ENCODE measurements at regions of chr6 and their contacts with region 1.

Region 1: DNA sequence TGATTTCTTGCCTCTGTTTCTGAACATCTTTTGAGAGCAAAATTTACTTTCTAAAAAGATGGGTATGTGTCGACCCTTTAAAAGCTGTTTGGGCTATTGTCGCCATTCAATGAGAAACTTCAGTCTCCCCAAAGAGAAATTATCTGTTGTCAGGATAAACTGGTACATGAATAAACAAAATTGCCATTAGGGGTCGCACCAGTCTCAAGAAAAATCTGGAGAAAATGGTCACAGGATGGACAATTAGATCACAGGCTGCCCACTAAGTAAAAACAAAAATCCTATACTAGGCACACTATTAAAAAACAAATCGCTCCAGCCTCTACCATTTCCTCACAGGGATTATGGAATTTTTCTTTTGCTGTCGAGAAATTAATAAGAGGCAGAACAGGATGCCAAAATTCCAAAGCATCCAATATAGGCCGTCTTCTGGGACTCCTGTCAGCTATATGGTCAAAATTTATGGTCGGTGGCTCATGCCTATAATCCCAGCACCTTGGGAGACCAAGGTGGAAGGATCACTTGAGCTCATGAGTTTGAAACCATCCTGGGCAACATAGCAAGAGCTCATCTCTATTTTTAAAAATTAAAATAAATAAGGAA is 5.5 kb upstream of the HLA-E start:
- DNase-seq: no peak
- ATAC-seq: no peak
- H3K4me3 Mint-ChIP-seq: no peak overlapping the region
- H3K27ac Mint-ChIP-seq: no peak overlapping the region
- H3K4me1 Mint-ChIP-seq: peaks cover 33% of the 10 kb centered on the region
- H3K27me3 Mint-ChIP-seq: peaks cover 26% of the 10 kb centered on the region
- CTCF ChIP-seq: peak; percentile 58

Region 2: GRCh38 chr6:30020626-30021025 is 463.2 kb before region 1 on chr6:
- CTCF ChIA-PET with region 1: no interaction called
- POLR2A ChIA-PET with region 1: no interaction called
- intact Hi-C with region 1: no loop called
- DNase-seq: no peak
- ATAC-seq: no peak
- H3K4me3 Mint-ChIP-seq: no peak overlapping the region
- H3K27ac Mint-ChIP-seq: no peak overlapping the region
- H3K4me1 Mint-ChIP-seq: peaks cover 11% of the 10 kb centered on the region
- H3K27me3 Mint-ChIP-seq: no peaks in the 10 kb centered on the region
- CTCF ChIP-seq: no peak

Region 3: DNA sequence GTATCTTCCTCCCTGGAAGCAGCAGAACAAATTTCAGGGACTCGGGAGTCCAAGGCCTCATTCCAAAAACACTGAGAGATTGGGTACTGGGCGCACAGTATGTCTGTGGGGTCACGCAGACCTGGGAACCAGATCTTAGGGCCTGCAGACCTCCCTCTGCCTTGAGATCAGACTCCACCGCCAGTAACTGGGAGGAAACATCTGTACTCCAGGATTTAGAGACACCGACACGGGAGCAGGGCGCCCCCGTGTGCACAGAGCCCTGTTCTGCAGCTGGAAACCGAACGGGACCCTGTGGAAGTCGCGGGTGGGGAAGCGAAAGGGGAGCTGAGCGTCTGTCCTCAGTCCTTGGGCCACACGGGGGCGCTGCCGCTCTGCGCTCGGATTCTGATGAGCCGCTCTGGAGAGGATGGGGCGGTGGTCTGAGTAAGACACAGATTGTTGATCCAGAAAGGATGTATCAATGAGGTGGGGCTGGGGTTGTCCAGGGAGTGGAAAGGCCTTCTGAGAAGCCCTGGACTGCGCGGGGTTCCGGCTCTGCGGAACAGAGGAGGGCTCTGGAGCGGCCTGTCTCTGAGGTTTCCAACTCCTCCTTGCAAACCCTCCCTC is 30.2 kb before region 1 on chr6:
- CTCF ChIA-PET with region 1: interaction called, 15 read pairs
- POLR2A ChIA-PET with region 1: interaction called, 3 read pairs
- intact Hi-C with region 1: loop called (anchors 1 kb)
- DNase-seq: peak; percentile 82
- ATAC-seq: peak; percentile 93
- H3K4me3 Mint-ChIP-seq: peak overlapping the region; percentile 29
- H3K27ac Mint-ChIP-seq: no peak overlapping the region
- H3K4me1 Mint-ChIP-seq: peaks cover 26% of the 10 kb centered on the region
- H3K27me3 Mint-ChIP-seq: peaks cover 67% of the 10 kb centered on the region
- CTCF ChIP-seq: no peak

Region 4: GRCh38 chr6:30533460-30534294 is 49.9 kb after region 1 on chr6:
- CTCF ChIA-PET with region 1: interaction called, 411 read pairs
- POLR2A ChIA-PET with region 1: interaction called, 458 read pairs
- intact Hi-C with region 1: loop called (anchors 1 kb)
- DNase-seq: no peak
- ATAC-seq: no peak
- H3K4me3 Mint-ChIP-seq: no peak overlapping the region
- H3K27ac Mint-ChIP-seq: peak overlapping the region; percentile 85
- H3K4me1 Mint-ChIP-seq: peaks cover 45% of the 10 kb centered on the region
- H3K27me3 Mint-ChIP-seq: no peaks in the 10 kb centered on the region
- CTCF ChIP-seq: no peak

Region 5: DNA sequence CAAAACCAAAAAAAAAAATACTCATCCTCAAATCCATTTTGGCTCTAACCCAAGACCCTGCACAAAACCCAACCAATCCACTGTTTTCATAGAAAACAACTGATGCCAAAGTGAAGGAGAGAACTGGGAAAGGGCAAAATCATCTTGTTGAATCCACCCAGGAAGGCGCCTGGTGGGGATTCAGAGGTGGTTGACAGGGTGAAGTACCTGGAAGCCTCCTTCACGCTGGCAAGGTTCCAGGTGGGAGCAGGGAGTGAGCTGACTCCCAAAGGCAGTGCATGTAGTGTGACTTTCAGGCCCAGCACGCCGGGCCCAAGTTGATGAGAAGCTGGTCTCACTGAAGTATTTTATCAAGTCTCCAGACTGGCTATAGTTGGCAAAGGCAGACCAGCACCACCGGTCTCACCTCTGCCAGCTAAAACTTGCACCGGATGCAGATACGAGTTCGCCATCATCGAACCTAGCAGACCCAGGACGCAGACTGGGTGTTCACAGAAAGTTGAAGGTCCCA is 116.7 kb after region 1 on chr6:
- CTCF ChIA-PET with region 1: interaction called, 171 read pairs
- POLR2A ChIA-PET with region 1: interaction called, 8 read pairs
- intact Hi-C with region 1: loop called (anchors 1 kb)
- DNase-seq: no peak
- ATAC-seq: no peak
- H3K4me3 Mint-ChIP-seq: no peak overlapping the region
- H3K27ac Mint-ChIP-seq: no peak overlapping the region
- H3K4me1 Mint-ChIP-seq: peaks cover 9% of the 10 kb centered on the region
- H3K27me3 Mint-ChIP-seq: no peaks in the 10 kb centered on the region
- CTCF ChIP-seq: no peak

Region 6: DNA sequence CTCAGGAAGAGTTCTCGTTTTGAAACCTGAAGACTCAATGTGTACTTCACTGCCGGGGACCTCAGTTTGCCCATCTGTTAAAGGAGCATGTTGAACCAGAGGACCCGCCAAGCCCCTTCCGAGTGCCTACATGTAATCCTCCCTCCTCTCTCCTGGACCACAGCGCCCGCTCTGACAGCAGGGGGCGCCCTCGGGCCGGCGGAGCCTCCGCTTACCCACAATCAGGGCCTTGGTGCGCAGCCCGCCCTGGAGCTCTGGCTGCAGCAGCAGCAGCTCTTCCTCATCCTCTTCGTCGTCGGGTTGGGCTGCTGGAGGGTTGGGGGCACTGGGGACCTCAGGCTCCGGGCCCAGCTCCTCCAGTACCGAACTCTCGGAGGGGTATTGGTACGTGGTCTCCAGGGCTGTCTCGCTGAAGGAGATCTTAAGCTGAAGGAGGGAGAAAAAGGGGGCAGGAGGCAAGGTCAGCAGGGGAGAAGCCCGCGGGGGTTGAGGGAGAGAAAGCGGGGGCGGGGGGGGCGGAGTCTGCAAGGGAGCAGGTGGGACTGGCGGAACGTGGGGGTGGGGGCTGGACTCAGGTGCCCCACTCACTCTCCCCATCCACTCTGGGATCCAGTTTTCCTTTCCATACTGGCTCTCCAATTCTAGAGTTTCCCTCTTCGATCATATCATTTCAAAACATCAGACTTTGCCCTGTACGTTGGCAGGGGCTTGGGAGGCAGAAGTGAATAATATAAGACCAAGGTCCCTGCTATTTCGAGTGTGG is 195.4 kb after region 1 on chr6:
- CTCF ChIA-PET with region 1: interaction called, 11 read pairs
- POLR2A ChIA-PET with region 1: no interaction called
- intact Hi-C with region 1: no loop called
- DNase-seq: peak; percentile 94
- ATAC-seq: peak; percentile 33
- H3K4me3 Mint-ChIP-seq: peak overlapping the region; percentile 92
- H3K27ac Mint-ChIP-seq: peak overlapping the region; percentile 99
- H3K4me1 Mint-ChIP-seq: peaks cover 62% of the 10 kb centered on the region
- H3K27me3 Mint-ChIP-seq: no peaks in the 10 kb centered on the region
- CTCF ChIP-seq: peak; percentile 73

Region 7: DNA sequence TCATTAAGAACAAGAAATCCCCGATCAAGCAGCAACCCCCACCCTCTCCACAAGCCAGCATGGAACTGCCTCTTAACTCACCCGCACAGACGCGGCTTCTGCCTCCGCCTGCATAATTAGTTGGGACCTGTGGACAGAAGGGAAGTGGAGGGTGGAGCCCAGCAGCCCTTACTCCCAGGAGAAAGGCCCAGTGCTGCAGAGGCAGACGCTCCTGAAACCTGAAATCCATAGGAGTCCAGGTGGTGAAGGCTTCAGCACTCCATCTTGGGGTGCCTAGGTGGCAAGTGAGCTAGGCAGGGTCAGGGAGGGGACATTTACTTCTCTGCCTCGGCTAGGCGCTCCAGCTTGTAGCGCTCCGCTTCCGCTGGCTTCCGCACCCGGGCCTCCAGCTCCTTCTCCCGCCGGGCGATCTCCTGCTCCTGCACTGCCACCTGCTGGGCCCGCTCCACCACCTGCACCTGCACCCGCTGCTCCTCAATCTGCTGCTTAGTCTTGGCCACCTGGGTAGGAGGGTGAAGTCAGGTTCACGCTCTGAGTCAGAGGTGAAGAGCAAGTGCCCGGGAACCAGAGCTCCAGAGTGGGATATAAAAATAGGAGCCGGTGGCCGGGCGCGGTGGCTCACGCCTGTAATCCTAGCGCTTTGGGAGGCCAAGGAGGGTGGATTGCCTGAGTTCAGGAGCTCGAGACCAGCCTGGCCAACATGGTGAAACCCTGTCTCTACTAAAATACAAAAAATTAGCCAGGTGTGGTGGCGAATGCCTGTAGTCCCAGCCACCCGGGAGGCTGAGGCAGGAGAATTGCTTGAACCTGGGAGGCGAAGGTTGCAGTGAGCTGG is 247.0 kb after region 1 on chr6:
- CTCF ChIA-PET with region 1: interaction called, 33 read pairs
- POLR2A ChIA-PET with region 1: no interaction called
- intact Hi-C with region 1: no loop called
- DNase-seq: peak; percentile 69
- ATAC-seq: peak; percentile 89
- H3K4me3 Mint-ChIP-seq: peak overlapping the region; percentile 41
- H3K27ac Mint-ChIP-seq: no peak overlapping the region
- H3K4me1 Mint-ChIP-seq: peaks cover 27% of the 10 kb centered on the region
- H3K27me3 Mint-ChIP-seq: no peaks in the 10 kb centered on the region
- CTCF ChIP-seq: peak; percentile 23

Measured in activated B cell treated with CpG ODN at 0.5 μM for 24 hours (primary cell).